Activated CD4-positive, alpha-beta T cell treated with anti-CD3 and anti-CD28 coated beads, Interleukin-2, amount 10 ng/mL, durations not matched to agents 24 days and 14 days (primary cell): ENCODE measurements at regions of chr1 and their contacts with region 1.

Region 1: GRCh38 chr1:77759071-77760028 is at the start of gene USP33:
- DNase-seq: peak; percentile 98
- H3K4me3 Mint-ChIP-seq: peak within 1 kb of the TSS; percentile 95
- H3K27ac Mint-ChIP-seq: peak within 1 kb of the TSS; percentile 96
- H3K4me1 Mint-ChIP-seq: peaks cover 27% of the 10 kb centered on the region
- H3K27me3 Mint-ChIP-seq: peaks cover 2% of the 10 kb centered on the region
- total RNA-seq, gene USP33: 39.9 and 47.4 TPM in 2 replicates

Region 2: GRCh38 chr1:77253211-77253610 is 506.1 kb before region 1 on chr1:
- intact Hi-C with region 1: no loop called
- DNase-seq: no peak
- H3K4me3 Mint-ChIP-seq: no peak overlapping the region
- H3K27ac Mint-ChIP-seq: no peak overlapping the region
- H3K4me1 Mint-ChIP-seq: no peaks in the 10 kb centered on the region
- H3K27me3 Mint-ChIP-seq: no peaks in the 10 kb centered on the region

Region 3: GRCh38 chr1:77744576-77744975 is 14.8 kb before region 1 on chr1:
- intact Hi-C with region 1: no loop called
- DNase-seq: no peak
- H3K4me3 Mint-ChIP-seq: no peak overlapping the region
- H3K27ac Mint-ChIP-seq: no peak overlapping the region
- H3K4me1 Mint-ChIP-seq: peaks cover 11% of the 10 kb centered on the region
- H3K27me3 Mint-ChIP-seq: no peaks in the 10 kb centered on the region

Region 4: GRCh38 chr1:77779529-77780281 is 20.4 kb after region 1 on chr1 and contains the start of gene MIGA1:
- intact Hi-C with region 1: loop called (anchors 1 kb)
- DNase-seq: peak; percentile 96
- H3K4me3 Mint-ChIP-seq: peak within 1 kb of the TSS; percentile 97
- H3K27ac Mint-ChIP-seq: peak within 1 kb of the TSS; percentile 88
- H3K4me1 Mint-ChIP-seq: peaks cover 24% of the 10 kb centered on the region
- H3K27me3 Mint-ChIP-seq: no peaks in the 10 kb centered on the region
- total RNA-seq, gene MIGA1: 7.5 and 7.6 TPM in 2 replicates

Region 5: GRCh38 chr1:77948841-77949424 is 189.6 kb after region 1 on chr1:
- intact Hi-C with region 1: loop called (anchors 5 kb)
- DNase-seq: no peak
- H3K4me3 Mint-ChIP-seq: no peak overlapping the region
- H3K27ac Mint-ChIP-seq: no peak overlapping the region
- H3K4me1 Mint-ChIP-seq: peaks cover 17% of the 10 kb centered on the region
- H3K27me3 Mint-ChIP-seq: no peaks in the 10 kb centered on the region